Lower leg skin (tissue), 4 donors: ENCODE measurements at regions of chr6 and their contacts with region 1.

Region 1: DNA sequence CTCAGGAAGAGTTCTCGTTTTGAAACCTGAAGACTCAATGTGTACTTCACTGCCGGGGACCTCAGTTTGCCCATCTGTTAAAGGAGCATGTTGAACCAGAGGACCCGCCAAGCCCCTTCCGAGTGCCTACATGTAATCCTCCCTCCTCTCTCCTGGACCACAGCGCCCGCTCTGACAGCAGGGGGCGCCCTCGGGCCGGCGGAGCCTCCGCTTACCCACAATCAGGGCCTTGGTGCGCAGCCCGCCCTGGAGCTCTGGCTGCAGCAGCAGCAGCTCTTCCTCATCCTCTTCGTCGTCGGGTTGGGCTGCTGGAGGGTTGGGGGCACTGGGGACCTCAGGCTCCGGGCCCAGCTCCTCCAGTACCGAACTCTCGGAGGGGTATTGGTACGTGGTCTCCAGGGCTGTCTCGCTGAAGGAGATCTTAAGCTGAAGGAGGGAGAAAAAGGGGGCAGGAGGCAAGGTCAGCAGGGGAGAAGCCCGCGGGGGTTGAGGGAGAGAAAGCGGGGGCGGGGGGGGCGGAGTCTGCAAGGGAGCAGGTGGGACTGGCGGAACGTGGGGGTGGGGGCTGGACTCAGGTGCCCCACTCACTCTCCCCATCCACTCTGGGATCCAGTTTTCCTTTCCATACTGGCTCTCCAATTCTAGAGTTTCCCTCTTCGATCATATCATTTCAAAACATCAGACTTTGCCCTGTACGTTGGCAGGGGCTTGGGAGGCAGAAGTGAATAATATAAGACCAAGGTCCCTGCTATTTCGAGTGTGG is 6.3 kb upstream of the DHX16 start:
- DNase-seq: peak; percentile 73 to 97
- H3K4me3 ChIP-seq: no peak overlapping the region
- CTCF ChIP-seq: peak in 2 of 3 donors; percentile 7 to 97
- POLR2A ChIP-seq: no peak

Region 2: GRCh38 chr6:29332672-29333071 is 1346.5 kb before region 1 on chr6:
- intact Hi-C with region 1: no loop called
- DNase-seq: no peak
- H3K4me3 ChIP-seq: no peak overlapping the region
- CTCF ChIP-seq: no peak
- POLR2A ChIP-seq: no peak

Region 3: DNA sequence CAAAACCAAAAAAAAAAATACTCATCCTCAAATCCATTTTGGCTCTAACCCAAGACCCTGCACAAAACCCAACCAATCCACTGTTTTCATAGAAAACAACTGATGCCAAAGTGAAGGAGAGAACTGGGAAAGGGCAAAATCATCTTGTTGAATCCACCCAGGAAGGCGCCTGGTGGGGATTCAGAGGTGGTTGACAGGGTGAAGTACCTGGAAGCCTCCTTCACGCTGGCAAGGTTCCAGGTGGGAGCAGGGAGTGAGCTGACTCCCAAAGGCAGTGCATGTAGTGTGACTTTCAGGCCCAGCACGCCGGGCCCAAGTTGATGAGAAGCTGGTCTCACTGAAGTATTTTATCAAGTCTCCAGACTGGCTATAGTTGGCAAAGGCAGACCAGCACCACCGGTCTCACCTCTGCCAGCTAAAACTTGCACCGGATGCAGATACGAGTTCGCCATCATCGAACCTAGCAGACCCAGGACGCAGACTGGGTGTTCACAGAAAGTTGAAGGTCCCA is 78.6 kb before region 1 on chr6:
- intact Hi-C with region 1: no loop called
- DNase-seq: no peak
- H3K4me3 ChIP-seq: no peak overlapping the region
- CTCF ChIP-seq: no peak
- POLR2A ChIP-seq: no peak

Region 4: DNA sequence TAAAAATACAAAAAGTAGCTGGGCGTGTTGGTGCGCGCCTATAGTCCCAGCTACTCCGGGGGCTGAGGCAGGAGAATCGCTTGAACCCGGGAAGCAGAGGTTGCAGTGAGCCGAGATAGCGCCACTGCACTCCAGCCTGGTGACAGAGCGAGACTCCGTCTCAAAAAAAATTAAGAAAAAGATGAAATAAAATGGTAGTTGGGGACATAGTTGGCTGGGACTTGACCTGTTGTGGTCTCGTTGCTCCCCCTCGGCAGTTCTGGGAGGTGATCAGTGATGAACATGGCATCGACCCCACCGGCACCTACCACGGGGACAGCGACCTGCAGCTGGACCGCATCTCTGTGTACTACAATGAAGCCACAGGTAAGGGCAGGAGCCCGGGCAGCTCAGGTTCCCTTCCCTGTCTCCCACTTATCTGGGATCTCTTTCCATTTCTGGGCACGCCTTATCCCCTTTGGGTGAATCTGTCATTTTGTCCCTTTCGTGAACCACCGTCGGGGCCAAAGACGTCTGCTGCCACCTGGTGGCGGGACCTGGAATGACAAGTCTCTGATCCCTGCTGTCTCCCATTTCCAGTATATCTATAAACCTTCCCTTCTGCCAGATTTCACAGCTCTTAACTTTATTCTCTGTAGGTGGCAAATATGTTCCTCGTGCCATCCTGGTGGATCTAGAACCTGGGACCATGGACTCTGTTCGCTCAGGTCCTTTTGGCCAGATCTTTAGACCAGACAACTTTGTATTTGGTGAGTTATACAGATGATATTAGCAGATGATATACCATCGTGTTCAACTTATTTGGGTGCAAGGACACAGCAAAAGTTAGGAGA is 43.4 kb after region 1 on chr6:
- intact Hi-C with region 1: loop called (anchors 1 kb)
- DNase-seq: peak; percentile 90 to 98
- H3K4me3 ChIP-seq: peak overlapping the region; percentile 86
- CTCF ChIP-seq: peak in 1 of 3 donors; percentile 98
- POLR2A ChIP-seq: no peak